AG04449 (cell line): ENCODE measurements at regions of chr1 and their contacts with region 1.

Region 1: GRCh38 chr1:183318433-183318832 is 99.7 kb downstream of the NMNAT2 start:
- DNase-seq: peak; percentile 83
- H3K4me3 ChIP-seq: no peak overlapping the region
- CTCF ChIP-seq: peak; percentile 78

Region 2: DNA sequence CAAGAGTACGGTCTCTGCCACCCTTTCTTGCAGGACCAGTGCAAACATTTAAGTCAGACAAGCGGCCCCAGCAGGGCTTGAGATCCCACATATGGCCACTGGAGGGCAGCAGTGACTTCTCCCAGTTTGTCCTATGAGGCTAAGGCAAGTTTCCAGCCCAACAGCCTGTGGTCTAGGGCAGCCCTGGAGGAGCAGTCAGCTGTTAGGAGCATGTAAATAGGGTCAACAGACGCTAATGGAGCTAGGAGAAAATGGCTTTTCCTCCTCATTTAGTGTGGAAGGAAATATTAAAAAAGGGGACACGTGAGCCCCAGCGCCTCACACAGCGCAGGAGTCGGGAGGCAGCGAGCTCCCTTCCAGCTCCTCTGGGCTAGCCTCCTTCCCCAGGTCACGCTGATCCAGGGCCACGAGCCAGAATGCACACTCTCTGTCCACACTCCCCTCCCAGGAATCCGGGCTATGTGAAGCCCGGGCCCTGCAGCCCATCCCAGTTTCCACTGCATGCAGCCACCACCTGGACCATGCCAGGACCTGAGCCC is 36.8 kb before region 1 on chr1:
- CTCF ChIA-PET with region 1: interaction called, 43 read pairs
- POLR2A ChIA-PET with region 1: no interaction called
- DNase-seq: no peak
- H3K4me3 ChIP-seq: no peak overlapping the region
- CTCF ChIP-seq: peak; percentile 93

Region 3: DNA sequence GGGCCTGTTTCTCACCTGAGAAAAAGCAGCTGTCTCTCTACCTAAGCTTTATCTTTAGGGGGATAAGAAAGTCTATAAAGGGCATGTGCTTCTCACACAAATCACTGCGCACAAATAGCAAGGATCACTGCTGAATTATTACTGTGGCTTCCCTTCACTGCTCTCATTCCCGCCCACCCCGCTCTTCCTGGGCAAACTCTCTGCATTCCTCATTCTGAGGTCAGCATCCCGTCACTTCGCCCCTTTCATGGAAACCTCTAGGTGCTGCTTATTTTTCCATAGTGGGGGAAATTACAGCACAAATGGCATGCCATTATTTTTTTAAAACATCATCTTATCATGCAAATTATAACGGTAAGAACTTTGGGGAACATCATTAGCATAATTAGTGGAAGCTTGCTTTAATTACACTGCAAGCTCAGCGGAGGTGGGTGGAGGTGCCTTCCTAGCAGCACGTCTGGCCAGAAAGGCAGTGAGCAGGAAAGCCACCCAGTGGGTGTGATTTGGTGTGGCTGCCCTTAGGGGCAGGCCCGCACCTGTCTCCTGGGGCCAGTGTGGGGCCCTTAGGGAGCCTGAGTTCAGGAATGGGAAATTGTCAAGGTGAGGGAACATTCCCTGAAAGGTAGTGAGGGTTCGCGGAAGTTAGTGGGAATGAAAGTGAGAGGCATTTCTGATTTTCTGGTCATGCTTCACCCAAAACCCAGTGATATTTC is 26.5 kb before region 1 on chr1:
- CTCF ChIA-PET with region 1: interaction called, 14 read pairs
- POLR2A ChIA-PET with region 1: no interaction called
- DNase-seq: no peak
- H3K4me3 ChIP-seq: no peak overlapping the region
- CTCF ChIP-seq: no peak

Region 4: GRCh38 chr1:183304440-183305107 is 13.9 kb before region 1 on chr1:
- CTCF ChIA-PET with region 1: interaction called, 11 read pairs
- POLR2A ChIA-PET with region 1: no interaction called
- DNase-seq: no peak
- H3K4me3 ChIP-seq: no peak overlapping the region
- CTCF ChIP-seq: no peak

Region 5: GRCh38 chr1:183471743-183472487 is 153.5 kb after region 1 on chr1:
- CTCF ChIA-PET with region 1: no interaction called
- POLR2A ChIA-PET with region 1: no interaction called
- DNase-seq: peak; percentile 92
- H3K4me3 ChIP-seq: peak overlapping the region; percentile 94
- CTCF ChIP-seq: peak; percentile 4